ENCODE measurements at regions of chr14 and their contacts with region 1.

Region 1: DNA sequence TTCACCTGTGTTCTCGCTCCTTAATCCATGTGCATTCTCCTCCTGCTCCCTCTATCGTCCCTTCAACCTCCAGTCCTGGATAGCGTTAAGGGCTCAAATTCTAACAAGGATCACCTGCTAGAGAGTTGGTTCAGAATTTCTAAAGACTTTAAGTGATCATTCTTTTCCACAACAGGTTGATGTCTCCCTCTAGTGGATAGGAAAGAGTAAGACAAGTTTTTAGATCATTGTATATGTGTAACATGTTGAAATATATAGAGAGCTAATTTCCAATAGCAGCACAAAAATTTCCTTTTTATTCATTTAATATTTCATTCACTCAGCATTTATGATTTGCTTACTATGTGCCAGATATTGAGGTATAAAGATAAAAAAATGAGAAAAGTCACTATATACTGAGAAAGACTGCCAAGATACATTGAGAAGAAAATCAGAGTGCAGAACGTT is 9.3 kb upstream of the ESR2 start:
- DNase-seq: no peak
- H3K4me3 Mint-ChIP-seq: no peak overlapping the region
- H3K27ac Mint-ChIP-seq: no peak overlapping the region
- H3K4me1 Mint-ChIP-seq: peaks cover 3% of the 10 kb centered on the region
- H3K27me3 Mint-ChIP-seq: peaks cover 2% of the 10 kb centered on the region

Region 2: GRCh38 chr14:63800651-63801375 is 502.7 kb before region 1 on chr14:
- CTCF ChIA-PET with region 1: interaction called, 13 read pairs
- POLR2A ChIA-PET with region 1: no interaction called
- DNase-seq: no peak
- H3K4me3 Mint-ChIP-seq: no peak overlapping the region
- H3K27ac Mint-ChIP-seq: no peak overlapping the region
- H3K4me1 Mint-ChIP-seq: peaks cover 6% of the 10 kb centered on the region
- H3K27me3 Mint-ChIP-seq: peaks cover 5% of the 10 kb centered on the region

Region 3: DNA sequence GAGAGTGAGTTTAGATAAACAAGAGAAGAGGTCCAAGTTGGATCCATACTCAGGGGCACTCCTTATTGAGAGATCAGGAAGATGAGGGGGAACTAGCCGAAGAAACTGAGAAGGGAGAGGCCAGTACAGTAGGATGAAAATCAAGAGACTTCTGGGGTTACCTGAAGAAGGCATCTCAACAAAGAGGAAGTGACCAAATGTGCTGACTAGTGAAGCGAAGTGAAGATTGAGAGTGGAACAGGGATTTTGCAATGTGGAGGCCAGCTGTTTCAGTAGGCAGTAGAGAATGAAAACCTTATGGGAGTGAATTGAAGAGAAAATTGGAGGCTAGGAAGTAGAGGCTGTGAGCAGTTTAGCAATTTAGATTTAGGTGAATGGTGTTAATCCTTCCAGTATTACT is 297.7 kb before region 1 on chr14:
- CTCF ChIA-PET with region 1: interaction called, 11 read pairs
- POLR2A ChIA-PET with region 1: no interaction called
- DNase-seq: no peak
- H3K4me3 Mint-ChIP-seq: no peak overlapping the region
- H3K27ac Mint-ChIP-seq: no peak overlapping the region
- H3K4me1 Mint-ChIP-seq: no peaks in the 10 kb centered on the region
- H3K27me3 Mint-ChIP-seq: no peaks in the 10 kb centered on the region

Region 4: GRCh38 chr14:64137657-64138290 is 165.7 kb before region 1 on chr14:
- CTCF ChIA-PET with region 1: interaction called, 16 read pairs
- POLR2A ChIA-PET with region 1: no interaction called
- DNase-seq: no peak
- H3K4me3 Mint-ChIP-seq: no peak overlapping the region
- H3K27ac Mint-ChIP-seq: no peak overlapping the region
- H3K4me1 Mint-ChIP-seq: no peaks in the 10 kb centered on the region
- H3K27me3 Mint-ChIP-seq: no peaks in the 10 kb centered on the region

Region 5: GRCh38 chr14:64349741-64350490 is 46.4 kb after region 1 on chr14:
- CTCF ChIA-PET with region 1: no interaction called
- POLR2A ChIA-PET with region 1: no interaction called
- DNase-seq: no peak
- H3K4me3 Mint-ChIP-seq: no peak overlapping the region
- H3K27ac Mint-ChIP-seq: no peak overlapping the region
- H3K4me1 Mint-ChIP-seq: no peaks in the 10 kb centered on the region
- H3K27me3 Mint-ChIP-seq: no peaks in the 10 kb centered on the region

Measured in activated CD4-positive, alpha-beta memory T cell treated with anti-CD3 and anti-CD28 coated beads, Interleukin-2, amount 10 ng/mL, durations not matched to agents 7 days and 5 days (primary cell).